Astrocyte of the cerebellum (primary cell): ENCODE measurements at regions of chr2 and their contacts with region 1.

Region 1: GRCh38 chr2:8119782-8120505 is 561.9 kb upstream of the ID2 start:
- DNase-seq: peak; percentile 32
- H3K4me3 ChIP-seq: no peak overlapping the region
- CTCF ChIP-seq: no peak

Region 2: DNA sequence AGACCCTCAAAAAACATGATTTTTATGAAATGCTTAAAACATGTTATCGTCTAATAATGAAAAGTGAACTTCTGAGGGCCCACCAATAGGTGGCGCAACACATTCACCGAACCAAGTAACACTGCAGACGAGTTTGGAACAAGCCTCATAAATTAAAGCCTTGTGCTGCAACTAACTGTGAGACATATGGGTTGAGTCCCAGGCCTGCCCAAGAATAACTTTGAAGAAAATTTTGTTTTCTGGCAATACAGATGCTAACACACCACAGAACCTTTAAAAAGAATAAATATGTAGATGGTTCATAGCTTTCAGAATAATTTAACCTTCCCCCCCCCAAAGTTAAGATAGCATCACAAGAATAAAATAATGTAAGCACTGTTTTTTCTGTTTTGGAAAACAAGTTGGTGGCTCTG is 916.9 kb before region 1 on chr2:
- in situ Hi-C with region 1: loop called (anchors 25 kb)
- DNase-seq: peak; percentile 57
- H3K4me3 ChIP-seq: no peak overlapping the region
- CTCF ChIP-seq: peak; percentile 94

Region 3: GRCh38 chr2:7825591-7826312 is 294.2 kb before region 1 on chr2:
- in situ Hi-C with region 1: no loop called
- DNase-seq: peak; percentile 94
- H3K4me3 ChIP-seq: no peak overlapping the region
- CTCF ChIP-seq: no peak

Region 4: DNA sequence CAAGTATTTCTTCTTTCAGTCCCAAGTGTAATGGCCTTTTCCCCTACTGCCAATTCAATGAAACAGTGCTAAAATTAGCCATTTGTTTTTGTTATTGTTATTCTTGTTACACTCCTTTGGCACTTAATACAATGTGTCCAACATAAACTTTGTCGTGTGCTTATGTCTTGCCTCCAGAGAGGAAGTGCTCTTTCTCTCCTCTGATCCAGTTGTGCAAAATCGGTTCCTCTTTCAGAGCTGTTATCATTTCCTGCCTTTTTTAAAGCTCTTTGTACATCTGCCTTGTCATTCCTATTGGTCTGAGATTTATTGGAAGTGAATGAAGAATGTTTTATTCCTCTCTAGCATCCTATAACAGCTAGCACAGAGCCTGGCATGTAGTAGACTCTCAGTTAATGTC is 61.3 kb before region 1 on chr2:
- in situ Hi-C with region 1: no loop called
- DNase-seq: no peak
- H3K4me3 ChIP-seq: no peak overlapping the region
- CTCF ChIP-seq: no peak

Region 5: GRCh38 chr2:8176887-8177286 is 56.9 kb after region 1 on chr2:
- in situ Hi-C with region 1: no loop called
- DNase-seq: no peak
- H3K4me3 ChIP-seq: no peak overlapping the region
- CTCF ChIP-seq: no peak